Breast epithelium (tissue), 4 donors: ENCODE measurements at regions of chr6 and their contacts with region 1.

Region 1: GRCh38 chr6:28277746-28278145 is 3.6 kb upstream of the PGBD1 start:
- DNase-seq: no peak
- H3K4me3 ChIP-seq: no peak overlapping the region
- H3K27ac ChIP-seq: no peak overlapping the region
- H3K4me1 ChIP-seq: no peaks in the 10 kb centered on the region
- H3K27me3 ChIP-seq: no peaks in the 10 kb centered on the region
- CTCF ChIP-seq: no peak
- POLR2A ChIP-seq: no peak

Region 2: DNA sequence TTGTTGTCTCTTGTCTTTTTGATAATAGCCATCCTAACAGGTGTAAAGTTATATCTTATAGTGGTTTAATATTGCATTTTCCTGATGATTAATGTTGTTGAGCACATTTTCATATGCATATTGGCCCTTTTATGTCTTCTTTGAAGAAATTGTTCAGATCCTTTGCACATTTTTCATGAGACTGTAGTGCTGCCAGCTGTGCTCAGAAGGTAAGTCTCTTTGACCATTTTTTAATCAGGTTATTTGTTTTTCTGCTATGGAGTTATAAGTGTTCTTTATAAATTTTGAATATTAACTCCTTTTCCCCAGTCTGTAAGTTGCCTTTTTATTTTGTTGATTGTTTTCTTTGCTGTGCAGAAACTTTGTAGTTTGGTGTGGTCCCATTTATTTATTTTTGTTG is 749.0 kb before region 1 on chr6:
- intact Hi-C with region 1: loop called (anchors 10 kb)
- DNase-seq: no peak
- H3K4me3 ChIP-seq: no peak overlapping the region
- H3K27ac ChIP-seq: no peak overlapping the region
- H3K4me1 ChIP-seq: no peaks in the 10 kb centered on the region
- H3K27me3 ChIP-seq: peaks cover 0 to 21% of the 10 kb centered on the region in 2 donors
- CTCF ChIP-seq: no peak
- POLR2A ChIP-seq: no peak

Region 3: GRCh38 chr6:28266962-28267694 is 10.6 kb before region 1 on chr6 and contains the start of gene ZSCAN26:
- intact Hi-C with region 1: loop called (anchors 1 kb)
- DNase-seq: peak; percentile 54 to 72
- H3K4me3 ChIP-seq: peak within 1 kb of the TSS; percentile 74 to 90 (median 75)
- H3K27ac ChIP-seq: peak within 1 kb of the TSS; percentile 91 to 96
- H3K4me1 ChIP-seq: peaks cover 0 to 9% of the 10 kb centered on the region in 2 donors
- H3K27me3 ChIP-seq: no peaks in the 10 kb centered on the region
- CTCF ChIP-seq: no peak
- POLR2A ChIP-seq: no peak
- total RNA-seq, gene ZSCAN26: 13.8 to 31.1 (median 25.8) TPM